RWPE1 (cell line): ENCODE measurements at regions of chr12 and their contacts with region 1.

Region 1: DNA sequence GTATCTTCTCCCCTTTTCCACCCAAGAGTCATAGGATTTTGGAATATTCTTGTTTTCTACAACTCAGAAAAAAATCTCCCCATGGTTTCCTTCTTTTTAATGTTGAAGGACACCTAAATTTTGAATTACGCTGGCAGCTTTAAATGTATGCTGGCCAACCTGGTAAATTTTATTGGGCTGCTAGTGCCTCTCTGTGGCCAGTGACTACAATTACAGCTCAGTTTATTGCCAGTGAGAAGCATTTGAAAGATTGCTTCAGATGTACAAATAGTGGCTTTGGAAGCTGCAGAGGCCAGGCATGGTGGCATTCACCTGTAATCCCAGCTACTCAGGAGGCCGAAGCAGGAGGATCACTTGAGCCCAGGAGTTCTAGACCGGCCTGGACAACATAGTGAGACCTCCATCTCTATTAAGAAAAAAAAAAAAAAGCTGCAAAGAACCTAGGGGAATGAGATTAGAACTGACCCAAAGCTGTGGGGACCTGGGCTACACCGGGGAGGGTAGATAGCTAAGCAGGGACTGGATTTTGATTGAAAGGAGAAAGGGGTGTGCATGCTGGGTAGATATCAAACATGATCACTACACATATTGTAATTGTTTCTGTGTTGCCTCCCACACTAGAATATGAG is 7.6 kb upstream of the RAB21 start:
- DNase-seq: peak; percentile 44
- H3K27ac ChIP-seq: no peak overlapping the region
- CTCF ChIP-seq: peak; percentile 74

Region 2: DNA sequence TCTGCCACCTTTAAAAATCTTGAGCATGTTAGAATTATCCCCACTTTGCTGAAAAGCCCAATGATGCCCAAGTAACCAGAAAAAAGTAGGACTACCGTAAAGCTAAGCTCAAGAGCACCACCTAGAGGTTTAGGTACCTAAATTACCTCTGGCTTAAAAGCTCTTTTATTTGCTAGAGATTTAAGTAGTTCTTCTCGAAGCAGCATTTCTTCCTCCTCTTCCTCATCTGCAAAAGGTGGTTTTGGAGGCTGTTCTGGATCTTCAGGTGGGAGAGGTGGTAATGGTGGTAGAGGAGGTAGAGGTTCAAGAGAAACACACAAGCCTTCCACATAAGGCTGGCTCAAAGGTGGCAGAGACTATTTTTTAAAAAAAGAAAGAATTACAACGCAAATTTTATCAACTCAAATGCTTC is 110.4 kb before region 1 on chr12:
- CTCF ChIA-PET with region 1: interaction called, 14 read pairs
- POLR2A ChIA-PET with region 1: no interaction called
- DNase-seq: peak; percentile 41
- H3K27ac ChIP-seq: no peak overlapping the region
- CTCF ChIP-seq: peak; percentile 76

Region 3: GRCh38 chr12:71663561-71664294 is 83.4 kb before region 1 on chr12 and contains the start of gene ZFC3H1:
- CTCF ChIA-PET with region 1: interaction called, 15 read pairs
- POLR2A ChIA-PET with region 1: interaction called, 4 read pairs
- DNase-seq: peak; percentile 93
- H3K27ac ChIP-seq: peak within 1 kb of the TSS; percentile 97
- CTCF ChIP-seq: no peak; the same call in 1 of the 2 replicates

Region 4: GRCh38 chr12:71685914-71686665 is 61.0 kb before region 1 on chr12 and contains the start of gene TMEM19:
- CTCF ChIA-PET with region 1: interaction called, 21 read pairs
- POLR2A ChIA-PET with region 1: interaction called, 6 read pairs
- DNase-seq: peak; percentile 89
- H3K27ac ChIP-seq: peak within 1 kb of the TSS; percentile 93
- CTCF ChIP-seq: peak; percentile 61